GM13977 (cell line): ENCODE measurements at regions of chr2 and their contacts with region 1.

Region 1: GRCh38 chr2:108583903-108584520 is 49.7 kb downstream of the LIMS1 start:
- DNase-seq: peak; percentile 63
- CTCF ChIP-seq: peak; percentile 77

Region 2: GRCh38 chr2:108396845-108397244 is 187.2 kb before region 1 on chr2:
- in situ Hi-C with region 1: loop called (anchors 25 kb)
- DNase-seq: no peak
- CTCF ChIP-seq: peak; percentile 46

Region 3: DNA sequence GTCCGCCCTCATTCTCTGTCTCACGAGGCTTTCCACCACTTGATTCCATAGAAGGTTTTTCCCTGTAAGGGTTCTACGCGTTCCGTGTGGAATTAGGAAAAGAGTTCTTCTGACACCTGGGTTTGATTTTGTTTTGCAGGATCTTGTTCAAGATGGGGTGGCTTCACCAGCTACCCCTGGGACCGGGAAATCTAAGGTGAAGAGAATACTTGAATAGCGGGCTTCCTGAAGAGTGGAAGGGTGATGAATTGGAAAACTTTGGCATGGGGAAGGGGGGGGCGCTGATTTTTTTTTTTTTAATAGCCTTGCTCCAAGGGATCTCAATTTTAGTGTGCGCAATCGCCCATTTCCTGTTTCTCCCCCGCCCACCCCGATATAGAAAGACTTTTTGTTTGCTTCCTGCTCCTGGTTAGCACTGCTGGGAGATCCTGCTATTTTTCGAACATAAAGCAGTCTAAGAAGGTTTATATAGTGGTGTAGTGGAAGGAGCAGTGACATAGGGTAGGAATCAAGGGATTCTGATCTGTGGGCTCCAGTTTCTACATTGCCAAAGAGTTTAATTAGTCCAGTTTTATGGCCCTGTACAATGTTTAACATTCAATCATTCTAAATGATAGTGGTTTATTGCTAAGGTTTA is 134.4 kb before region 1 on chr2:
- in situ Hi-C with region 1: loop called (anchors 25 kb)
- DNase-seq: peak; percentile 20
- CTCF ChIP-seq: no peak